Posterior vena cava (tissue), 2 donors: ENCODE measurements at regions of chr11 and their contacts with region 1.

Region 1: GRCh38 chr11:3091791-3092602 is 34.8 kb upstream of the CARS1 start:
- DNase-seq: no peak

Region 2: DNA sequence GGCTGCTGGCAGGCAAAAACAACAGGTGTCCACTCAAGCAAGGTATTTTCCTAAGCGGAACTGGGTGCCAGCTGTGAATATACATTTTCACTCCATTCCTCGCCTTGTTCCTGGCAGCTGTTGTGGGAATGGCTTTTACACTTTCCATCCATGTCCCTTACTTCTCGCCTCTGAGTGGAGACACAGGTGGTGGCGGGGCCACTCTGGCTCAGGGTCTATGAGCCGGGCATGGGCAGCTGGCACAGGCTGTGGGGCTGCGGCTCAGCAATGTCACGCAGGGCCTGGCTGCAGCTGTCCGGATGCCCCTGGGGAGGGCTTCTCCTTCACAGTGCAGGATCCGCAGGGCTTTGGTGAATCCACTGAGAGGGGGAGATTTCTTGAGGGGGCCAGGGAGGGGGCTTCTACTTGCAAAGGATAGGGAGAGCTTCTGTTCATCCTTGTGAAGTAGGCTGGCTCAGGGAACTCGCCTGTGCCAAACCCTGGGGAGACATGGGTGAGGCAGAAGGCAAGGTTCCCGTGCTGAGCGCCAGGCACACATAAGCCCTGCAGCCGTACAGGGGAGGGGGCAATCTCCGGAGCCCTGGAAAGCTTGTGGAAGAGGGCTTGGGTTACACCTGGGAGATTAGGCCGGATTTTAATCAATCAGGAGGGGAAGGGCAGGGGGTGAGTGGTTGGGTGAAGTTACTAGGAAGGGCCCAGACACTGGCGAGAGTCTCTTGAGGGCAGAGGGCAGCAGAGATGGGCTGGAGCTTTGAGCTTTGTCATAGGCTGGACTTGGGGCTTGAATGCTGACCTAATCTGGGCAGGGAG is 437.9 kb before region 1 on chr11:
- intact Hi-C with region 1: no loop called
- DNase-seq: no peak

Region 3: GRCh38 chr11:3014057-3014938 is 77.7 kb before region 1 on chr11:
- intact Hi-C with region 1: no loop called
- DNase-seq: no peak

Region 4: GRCh38 chr11:3037040-3037944 is 54.7 kb before region 1 on chr11:
- intact Hi-C with region 1: loop called (anchors 1 to 2 kb)
- DNase-seq: peak; percentile 95

Region 5: DNA sequence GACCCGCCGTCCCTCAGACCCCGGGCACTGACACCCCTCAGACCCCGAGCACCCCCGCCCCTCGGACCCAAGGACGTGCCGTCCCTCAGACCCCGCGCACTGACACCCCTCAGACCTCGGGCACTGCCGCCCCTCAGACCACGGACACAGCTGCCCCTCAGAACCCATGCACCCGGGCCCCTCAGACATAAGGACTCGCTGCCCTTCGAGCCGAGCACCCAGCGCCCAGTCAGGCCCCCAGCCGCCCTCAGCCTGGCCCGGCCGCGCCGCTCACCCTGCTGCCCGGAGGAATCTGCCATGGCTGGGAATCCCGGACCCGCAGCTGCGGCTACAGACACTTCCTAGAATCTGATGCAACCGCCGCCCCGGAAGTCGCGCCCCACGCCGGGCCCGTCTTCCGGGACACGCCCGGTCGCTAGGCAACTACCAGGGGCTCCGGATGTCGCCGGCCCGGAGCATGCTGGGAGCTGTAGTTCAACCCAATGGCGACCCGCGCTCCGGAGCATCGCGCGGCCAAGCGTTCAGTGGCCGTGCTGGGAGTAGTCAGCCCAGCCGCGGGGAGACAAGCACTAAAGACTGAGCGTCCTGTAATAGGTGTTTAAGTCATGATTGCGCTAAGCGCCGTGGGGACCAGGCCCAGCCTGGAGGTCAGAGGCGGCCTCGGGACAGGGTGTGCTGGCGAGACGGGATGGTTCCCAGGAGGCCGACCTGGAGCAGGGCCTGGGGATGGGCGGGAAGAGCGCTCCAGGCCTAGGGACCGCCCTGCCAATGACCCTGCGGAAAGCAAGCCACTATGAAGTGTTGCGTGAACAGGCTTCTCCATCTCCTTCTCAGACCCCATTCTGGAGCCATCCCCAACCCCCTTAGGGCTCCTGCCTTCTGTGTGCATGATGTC is 34.7 kb before region 1 on chr11 and contains the start of gene CARS1:
- intact Hi-C with region 1: loop called in 1 of 2 experiments (anchors 5 kb)
- DNase-seq: peak; percentile 99
- total RNA-seq, gene CARS1: 44.2 to 60.6 TPM